ENCODE measurements at regions of chr11 and their contacts with region 1.

Region 1: DNA sequence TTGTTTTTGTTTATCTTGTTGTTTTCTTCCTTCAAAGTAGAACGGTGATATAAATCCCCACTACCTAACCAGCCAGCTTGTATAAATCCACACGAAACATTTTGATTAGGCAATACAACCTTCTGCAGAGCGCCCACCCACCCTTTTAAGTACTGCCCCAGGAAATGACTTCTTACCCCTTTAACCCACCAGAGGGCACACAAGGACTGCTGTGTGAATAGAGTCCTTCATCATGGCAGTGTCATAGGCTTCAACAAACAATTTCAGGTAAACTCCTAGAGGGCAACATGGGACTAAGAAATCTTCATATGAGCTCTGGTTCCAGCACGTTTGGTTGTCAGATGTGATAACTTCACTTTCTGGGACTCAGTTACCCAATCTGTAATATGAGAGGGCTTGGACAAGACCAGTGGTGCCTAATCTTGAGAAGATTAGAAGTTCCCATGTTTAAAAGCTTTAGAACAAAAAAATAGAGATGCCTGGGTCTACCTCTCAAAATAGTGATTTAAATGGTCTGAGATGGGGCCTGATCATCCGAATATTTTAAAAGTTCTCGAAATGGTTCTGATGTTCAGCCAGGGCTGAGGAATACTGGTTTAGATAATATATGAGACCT is 56.1 kb downstream of the PIWIL4 start:
- DNase-seq: peak; percentile 24
- H3K4me3 Mint-ChIP-seq: no peak overlapping the region
- H3K27ac Mint-ChIP-seq: no peak overlapping the region
- H3K4me1 Mint-ChIP-seq: no peaks in the 10 kb centered on the region
- H3K27me3 Mint-ChIP-seq: peaks cover 6% of the 10 kb centered on the region

Region 2: DNA sequence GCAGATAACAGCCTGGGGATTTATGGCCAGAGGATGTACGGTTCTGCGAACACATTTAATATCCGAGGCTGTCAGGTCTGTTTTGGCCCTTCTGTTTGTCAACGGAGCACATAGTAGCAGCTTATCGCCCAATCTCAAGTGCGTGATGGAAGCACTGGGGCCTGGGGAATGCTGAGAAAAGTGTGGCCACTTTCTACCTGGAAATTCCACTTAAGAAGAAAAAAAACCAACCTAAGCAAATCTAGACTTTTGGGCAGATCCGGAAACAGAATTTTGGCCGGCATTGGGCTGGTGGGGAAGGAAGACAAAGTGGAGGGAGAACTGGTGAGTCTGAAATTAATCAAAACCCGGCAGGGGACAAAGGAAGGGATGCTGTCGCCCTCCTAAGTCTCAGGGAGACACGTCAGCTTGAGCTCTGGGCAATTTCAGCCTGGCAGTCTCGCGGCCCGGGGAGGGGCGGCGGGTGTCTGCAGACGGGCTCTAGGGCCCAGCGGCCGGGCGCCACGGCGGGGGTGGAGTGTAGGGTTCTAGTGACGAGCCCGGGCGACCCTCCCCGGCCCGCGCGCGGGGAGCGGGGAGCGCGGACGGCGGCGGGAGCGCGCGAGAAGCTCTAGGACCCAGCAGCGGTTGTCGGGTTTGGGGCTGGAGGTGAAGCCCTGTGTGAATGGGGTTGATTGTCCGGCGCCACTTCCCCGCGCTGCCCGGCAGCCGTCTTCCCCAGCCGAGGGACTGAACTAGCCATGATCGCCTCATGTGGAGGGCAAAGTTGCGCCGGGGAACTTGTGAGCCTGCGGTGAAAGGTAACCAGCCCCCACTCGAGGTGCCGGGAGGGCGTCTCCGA is 144.8 kb after region 1 on chr11 and contains the start of gene AMOTL1:
- intact Hi-C with region 1: loop called (anchors 10 kb)
- DNase-seq: peak; percentile 25
- H3K4me3 Mint-ChIP-seq: peak within 1 kb of the TSS; percentile 76
- H3K27ac Mint-ChIP-seq: peak within 1 kb of the TSS; percentile 49
- H3K4me1 Mint-ChIP-seq: peaks cover 6% of the 10 kb centered on the region
- H3K27me3 Mint-ChIP-seq: peaks cover 48% of the 10 kb centered on the region
- total RNA-seq, gene AMOTL1: 4.8 and 5.9 TPM in 2 replicates

Region 3: GRCh38 chr11:94897330-94897768 is 274.1 kb after region 1 on chr11:
- intact Hi-C with region 1: loop called (anchors 1 kb)
- DNase-seq: no peak
- H3K4me3 Mint-ChIP-seq: no peak overlapping the region
- H3K27ac Mint-ChIP-seq: no peak overlapping the region
- H3K4me1 Mint-ChIP-seq: peaks cover 3% of the 10 kb centered on the region
- H3K27me3 Mint-ChIP-seq: peaks cover 7% of the 10 kb centered on the region

Region 4: DNA sequence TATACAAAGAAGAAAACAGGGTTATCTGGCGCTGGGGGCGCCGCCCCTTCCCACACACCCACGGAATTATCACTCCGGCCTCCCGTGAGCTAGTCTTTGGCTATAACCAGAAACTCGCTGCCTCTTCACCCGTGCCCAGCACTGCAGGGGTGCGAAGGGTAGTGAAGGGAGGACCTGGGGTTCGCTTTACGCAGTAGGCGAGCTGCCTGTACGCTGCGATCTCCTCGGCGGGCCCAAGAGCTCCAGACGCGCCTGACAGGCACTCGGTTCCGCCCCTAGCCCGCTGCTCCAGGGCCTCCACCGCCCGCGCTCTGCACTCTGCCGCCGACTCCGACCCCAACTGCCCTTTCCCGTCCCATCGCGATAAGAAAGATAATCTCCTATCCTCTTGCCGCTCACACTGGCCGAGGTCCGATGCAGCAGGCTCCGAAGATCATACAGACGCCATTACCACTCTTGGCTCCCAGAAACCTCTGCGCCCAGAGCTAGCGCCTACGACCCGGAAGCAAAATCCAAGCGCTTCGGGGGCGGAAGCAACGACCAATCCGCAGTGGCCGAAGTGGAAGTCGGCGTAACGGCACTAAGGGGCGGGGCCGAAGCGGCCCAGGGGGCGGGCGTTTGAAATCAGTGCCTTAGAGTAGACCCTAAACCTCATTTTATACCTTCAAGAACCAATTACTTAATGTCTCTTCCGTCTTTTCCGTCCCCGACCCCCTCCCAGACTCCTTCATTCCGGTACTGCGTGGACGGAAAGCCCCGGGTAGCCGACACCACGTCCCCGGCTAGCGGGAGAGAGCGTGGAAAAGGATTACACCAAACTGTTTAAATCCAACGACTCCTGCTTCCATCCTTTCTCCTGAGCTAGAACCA is 350.1 kb after region 1 on chr11 and contains the starts of genes CWC15 and KDM4D:
- intact Hi-C with region 1: loop called (anchors 10 kb)
- DNase-seq: peak; percentile 91
- H3K4me3 Mint-ChIP-seq: peak within 1 kb of the TSS; percentile 95
- H3K27ac Mint-ChIP-seq: peak within 1 kb of the TSS; percentile 91
- H3K4me1 Mint-ChIP-seq: peaks cover 28% of the 10 kb centered on the region
- H3K27me3 Mint-ChIP-seq: no peaks in the 10 kb centered on the region
- total RNA-seq, gene CWC15: 86.1 and 94.4 TPM in 2 replicates
- total RNA-seq, gene KDM4D: 0.48 and 0.84 TPM in 2 replicates